Uterus (tissue), 4 donors: ENCODE measurements at regions of chr7 and their contacts with region 1.

Region 1: DNA sequence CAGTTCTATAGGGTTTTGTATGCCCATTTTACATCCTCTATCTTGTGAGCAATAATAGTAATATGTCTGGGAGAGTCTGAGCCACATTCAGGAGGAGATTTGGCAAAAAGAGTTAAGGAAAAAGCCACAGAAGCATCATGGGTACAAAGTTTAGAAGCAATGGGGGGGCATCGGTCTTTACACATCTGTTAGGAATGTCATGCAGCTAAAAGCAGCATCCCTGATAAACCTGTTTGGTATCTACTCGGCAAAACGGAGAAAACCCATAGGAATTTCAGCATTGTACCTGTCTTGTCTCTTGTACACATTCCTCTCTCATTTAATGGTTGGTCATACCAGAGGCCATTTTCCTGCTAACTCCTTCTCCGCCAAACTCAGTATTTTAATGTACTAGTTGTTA is 12.5 kb upstream of the HERPUD2 start:
- DNase-seq: no peak
- H3K4me3 ChIP-seq: no peak overlapping the region
- H3K27ac ChIP-seq: no peak overlapping the region
- H3K4me1 ChIP-seq: no peaks in the 10 kb centered on the region
- H3K27me3 ChIP-seq: no peaks in the 10 kb centered on the region
- CTCF ChIP-seq: no peak
- POLR2A ChIP-seq: no peak

Region 2: DNA sequence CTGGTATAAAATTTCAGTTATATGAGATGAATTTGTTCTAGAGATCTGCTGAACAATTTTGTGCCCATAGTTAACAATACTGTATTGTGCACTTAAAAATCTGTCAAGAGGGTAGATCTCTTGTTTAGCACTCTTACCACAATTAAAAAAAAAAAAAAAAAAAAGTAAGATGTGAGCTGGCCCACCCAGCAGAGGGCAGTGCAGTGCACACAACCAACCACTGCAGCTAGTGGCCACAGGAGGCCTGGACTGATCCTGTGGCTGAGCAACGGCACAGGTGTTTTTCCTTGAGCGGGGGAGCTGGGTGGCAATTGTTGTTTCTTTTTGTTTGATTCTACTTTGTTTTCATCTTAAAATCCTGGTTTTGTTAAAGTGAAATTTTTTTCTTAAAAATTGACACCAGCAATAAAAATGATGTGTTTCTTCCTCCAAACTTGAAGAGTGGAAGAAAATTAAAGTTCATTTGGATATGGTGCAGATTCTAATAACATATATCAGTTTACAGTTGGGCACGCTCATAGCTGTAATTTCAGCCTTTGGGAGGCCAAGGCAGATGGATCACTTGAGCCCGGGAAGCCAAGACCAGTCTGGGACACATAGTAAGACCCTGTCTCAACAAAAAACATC is 282.4 kb before region 1 on chr7:
- intact Hi-C with region 1: no loop called
- DNase-seq: peak in 1 of 2 donors; percentile 16
- H3K4me3 ChIP-seq: no peak overlapping the region
- H3K27ac ChIP-seq: no peak overlapping the region
- H3K4me1 ChIP-seq: no peaks in the 10 kb centered on the region
- H3K27me3 ChIP-seq: no peaks in the 10 kb centered on the region
- CTCF ChIP-seq: peak in 2 of 4 experiments; percentile 31 to 37
- POLR2A ChIP-seq: no peak

Region 3: GRCh38 chr7:35906191-35906908 is 198.9 kb after region 1 on chr7:
- intact Hi-C with region 1: loop called (anchors 5 kb)
- DNase-seq: peak; percentile 55 to 74
- H3K4me3 ChIP-seq: no peak overlapping the region
- H3K27ac ChIP-seq: no peak overlapping the region
- H3K4me1 ChIP-seq: no peaks in the 10 kb centered on the region
- H3K27me3 ChIP-seq: no peaks in the 10 kb centered on the region
- CTCF ChIP-seq: peak; percentile 92 to 96 (median 94)
- POLR2A ChIP-seq: no peak